ENCODE measurements at regions of chr16 and their contacts with region 1.

Region 1: GRCh38 chr16:67017810-67018488 is 11.0 kb upstream of the CBFB start:
- DNase-seq: peak; percentile 95
- ATAC-seq: peak; percentile 96
- H3K4me3 Mint-ChIP-seq: no peak overlapping the region
- H3K27ac Mint-ChIP-seq: no peak overlapping the region
- H3K4me1 Mint-ChIP-seq: no peaks in the 10 kb centered on the region
- H3K27me3 Mint-ChIP-seq: peaks cover 41% of the 10 kb centered on the region
- CTCF ChIP-seq: peak; percentile 85

Region 2: GRCh38 chr16:66774981-66775380 is 243.0 kb before region 1 on chr16:
- CTCF ChIA-PET with region 1: no interaction called
- POLR2A ChIA-PET with region 1: no interaction called
- DNase-seq: no peak
- ATAC-seq: no peak
- H3K4me3 Mint-ChIP-seq: no peak overlapping the region
- H3K27ac Mint-ChIP-seq: no peak overlapping the region
- H3K4me1 Mint-ChIP-seq: no peaks in the 10 kb centered on the region
- H3K27me3 Mint-ChIP-seq: no peaks in the 10 kb centered on the region
- CTCF ChIP-seq: no peak

Region 3: GRCh38 chr16:66923247-66923731 is 94.7 kb before region 1 on chr16:
- CTCF ChIA-PET with region 1: no interaction called
- POLR2A ChIA-PET with region 1: no interaction called
- DNase-seq: no peak
- ATAC-seq: no peak
- H3K4me3 Mint-ChIP-seq: no peak overlapping the region
- H3K27ac Mint-ChIP-seq: no peak overlapping the region
- H3K4me1 Mint-ChIP-seq: peaks cover 7% of the 10 kb centered on the region; the same call in 1 of the 2 replicates
- H3K27me3 Mint-ChIP-seq: peaks cover 59% of the 10 kb centered on the region
- CTCF ChIP-seq: no peak

Region 4: GRCh38 chr16:66954097-66954659 is 63.8 kb before region 1 on chr16:
- CTCF ChIA-PET with region 1: interaction called, 13 read pairs
- POLR2A ChIA-PET with region 1: interaction called, 5 read pairs
- DNase-seq: peak; percentile 85
- ATAC-seq: peak; percentile 88
- H3K4me3 Mint-ChIP-seq: no peak overlapping the region
- H3K27ac Mint-ChIP-seq: no peak overlapping the region
- H3K4me1 Mint-ChIP-seq: peaks cover 4% of the 10 kb centered on the region
- H3K27me3 Mint-ChIP-seq: peaks cover 40% of the 10 kb centered on the region
- CTCF ChIP-seq: peak; percentile 62; the same call in 1 of the 2 replicates

Region 5: GRCh38 chr16:66991545-66992077 is 26.3 kb before region 1 on chr16:
- CTCF ChIA-PET with region 1: interaction called, 13 read pairs
- POLR2A ChIA-PET with region 1: no interaction called
- DNase-seq: no peak
- ATAC-seq: no peak
- H3K4me3 Mint-ChIP-seq: no peak overlapping the region
- H3K27ac Mint-ChIP-seq: no peak overlapping the region
- H3K4me1 Mint-ChIP-seq: no peaks in the 10 kb centered on the region
- H3K27me3 Mint-ChIP-seq: peaks cover 17% of the 10 kb centered on the region
- CTCF ChIP-seq: no peak

Region 6: GRCh38 chr16:67006930-67007658 is 10.9 kb before region 1 on chr16:
- CTCF ChIA-PET with region 1: interaction called, 31 read pairs
- POLR2A ChIA-PET with region 1: no interaction called
- DNase-seq: no peak
- ATAC-seq: no peak
- H3K4me3 Mint-ChIP-seq: no peak overlapping the region
- H3K27ac Mint-ChIP-seq: no peak overlapping the region
- H3K4me1 Mint-ChIP-seq: no peaks in the 10 kb centered on the region
- H3K27me3 Mint-ChIP-seq: peaks cover 57% of the 10 kb centered on the region
- CTCF ChIP-seq: no peak

Region 7: GRCh38 chr16:67104061-67104460 is 86.1 kb after region 1 on chr16:
- CTCF ChIA-PET with region 1: interaction called, 62 read pairs
- POLR2A ChIA-PET with region 1: interaction called, 3 read pairs
- DNase-seq: peak; percentile 60
- ATAC-seq: peak; percentile 96
- H3K4me3 Mint-ChIP-seq: no peak overlapping the region
- H3K27ac Mint-ChIP-seq: no peak overlapping the region; the same call in none of the 2 replicates
- H3K4me1 Mint-ChIP-seq: 0 out of 2 replicates have a peak, but pooled peaks cover 2% of the 10 kb centered on the region
- H3K27me3 Mint-ChIP-seq: peaks cover 5% of the 10 kb centered on the region; the same call in 1 of the 2 replicates
- CTCF ChIP-seq: no peak

Region 8: GRCh38 chr16:67173808-67174705 is 156.1 kb after region 1 on chr16:
- CTCF ChIA-PET with region 1: interaction called, 33 read pairs
- POLR2A ChIA-PET with region 1: no interaction called
- DNase-seq: peak; percentile 76
- ATAC-seq: peak; percentile 19
- H3K4me3 Mint-ChIP-seq: peak overlapping the region; percentile 84
- H3K27ac Mint-ChIP-seq: no peak overlapping the region; the same call in 1 of the 2 replicates
- H3K4me1 Mint-ChIP-seq: peaks cover 36% of the 10 kb centered on the region
- H3K27me3 Mint-ChIP-seq: peaks cover 89% of the 10 kb centered on the region
- CTCF ChIP-seq: no peak

Region 9: GRCh38 chr16:67198238-67198734 is 180.3 kb after region 1 on chr16:
- CTCF ChIA-PET with region 1: interaction called, 14 read pairs
- POLR2A ChIA-PET with region 1: no interaction called
- DNase-seq: peak; percentile 53
- ATAC-seq: peak; percentile 13
- H3K4me3 Mint-ChIP-seq: peak overlapping the region; percentile 55
- H3K27ac Mint-ChIP-seq: peak overlapping the region; percentile 85; the same call in 1 of the 2 replicates
- H3K4me1 Mint-ChIP-seq: peaks cover 13% of the 10 kb centered on the region
- H3K27me3 Mint-ChIP-seq: no peaks in the 10 kb centered on the region
- CTCF ChIP-seq: no peak